ENCODE measurements at regions of chr13 and their contacts with region 1.

Region 1: DNA sequence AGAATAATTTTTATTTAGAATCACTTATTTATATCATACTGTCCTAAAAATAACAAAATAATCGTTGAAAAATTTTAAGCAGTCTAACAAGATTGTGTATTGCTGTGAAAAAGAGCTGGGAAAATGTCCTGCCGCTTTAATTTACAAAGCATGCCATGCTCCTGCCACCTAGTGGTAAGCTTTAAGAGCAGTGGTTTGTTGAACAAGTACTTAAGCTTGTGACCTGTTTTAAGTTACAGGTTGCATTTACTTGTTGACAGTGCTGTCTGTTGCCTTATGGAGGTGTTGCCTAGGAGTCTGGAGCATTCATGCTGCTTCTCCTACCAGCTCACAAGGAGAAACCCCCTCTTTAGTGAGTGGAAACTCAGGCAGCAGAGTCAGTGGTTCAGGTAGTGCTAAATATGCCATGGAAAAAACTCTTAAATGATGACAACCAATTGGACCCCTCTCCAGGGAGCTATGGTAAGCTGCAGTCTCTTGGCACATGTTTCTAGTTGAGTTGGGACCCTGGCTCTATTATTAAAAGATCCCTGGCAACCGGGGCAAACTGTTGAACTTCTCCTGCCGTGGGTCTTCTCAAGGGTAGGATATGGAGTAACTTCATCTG is 68.4 kb downstream of the SPATA13 start:
- DNase-seq: peak; percentile 44
- H3K4me3 Mint-ChIP-seq: no peak overlapping the region
- H3K27ac Mint-ChIP-seq: no peak overlapping the region
- H3K4me1 Mint-ChIP-seq: peaks cover 24% of the 10 kb centered on the region
- H3K27me3 Mint-ChIP-seq: no peaks in the 10 kb centered on the region

Region 2: GRCh38 chr13:23921451-23921888 is 307.5 kb before region 1 on chr13:
- CTCF ChIA-PET with region 1: interaction called, 9 read pairs
- POLR2A ChIA-PET with region 1: no interaction called
- intact Hi-C with region 1: loop called (anchors 2 kb)
- DNase-seq: no peak
- H3K4me3 Mint-ChIP-seq: no peak overlapping the region
- H3K27ac Mint-ChIP-seq: no peak overlapping the region
- H3K4me1 Mint-ChIP-seq: no peaks in the 10 kb centered on the region
- H3K27me3 Mint-ChIP-seq: peaks cover 20% of the 10 kb centered on the region

Region 3: DNA sequence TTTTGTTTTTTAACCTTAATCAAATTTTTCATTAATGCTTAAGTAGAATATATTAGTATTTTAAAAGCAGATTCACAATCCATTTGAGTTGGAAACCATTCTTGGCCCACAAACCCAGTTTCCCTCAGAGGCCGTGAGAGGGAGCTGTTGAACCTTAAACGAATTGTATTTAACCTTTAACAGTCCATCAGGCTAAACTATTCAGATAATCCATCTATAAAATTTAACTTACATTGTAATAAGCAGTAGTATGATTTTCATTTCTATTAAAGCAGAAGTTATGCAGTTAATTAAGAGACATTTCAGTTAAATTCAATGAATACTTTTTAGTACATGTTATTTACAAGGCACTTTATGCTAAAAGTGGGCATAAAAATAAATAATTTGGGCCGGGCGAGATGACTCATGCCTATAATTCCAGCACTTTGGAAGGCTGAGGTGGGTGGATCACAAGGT is 208.6 kb before region 1 on chr13:
- CTCF ChIA-PET with region 1: interaction called, 34 read pairs
- POLR2A ChIA-PET with region 1: no interaction called
- intact Hi-C with region 1: loop called (anchors 1 kb)
- DNase-seq: peak; percentile 51
- H3K4me3 Mint-ChIP-seq: no peak overlapping the region
- H3K27ac Mint-ChIP-seq: no peak overlapping the region
- H3K4me1 Mint-ChIP-seq: peaks cover 3% of the 10 kb centered on the region
- H3K27me3 Mint-ChIP-seq: no peaks in the 10 kb centered on the region

Region 4: DNA sequence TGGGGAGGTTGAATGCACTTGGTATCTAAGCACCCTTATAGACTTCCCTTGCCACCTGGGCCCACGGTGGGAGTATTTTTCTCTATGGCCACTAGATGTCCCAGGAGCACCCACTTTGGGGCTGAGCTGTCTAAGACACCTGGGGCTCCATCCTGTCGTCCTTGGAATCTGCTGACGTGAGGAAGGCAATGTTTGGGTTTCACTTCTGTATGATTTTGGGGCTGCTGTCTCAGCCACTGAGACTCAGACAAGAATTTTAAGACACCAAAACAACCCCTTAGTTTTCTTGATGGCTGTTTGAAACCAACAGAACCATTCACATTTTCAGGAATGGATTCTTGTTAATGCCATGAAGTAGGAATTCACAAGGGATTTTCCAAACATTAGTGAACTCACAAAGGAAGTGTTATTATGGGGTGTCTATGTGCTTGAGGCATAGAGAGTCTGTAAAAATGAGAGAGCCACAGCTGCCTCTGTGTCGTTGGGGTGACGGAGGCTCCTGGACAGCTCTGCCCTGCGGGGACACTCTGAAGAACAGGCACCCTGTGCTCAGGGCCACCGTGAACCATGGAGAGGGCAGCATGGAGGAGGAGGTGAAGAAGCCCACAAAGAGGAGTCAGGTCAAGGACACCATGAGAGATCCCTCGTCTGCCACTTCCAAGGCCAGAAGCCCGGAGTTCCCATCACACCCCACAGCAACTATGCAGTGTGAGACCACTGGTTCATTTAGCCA is 175.3 kb before region 1 on chr13:
- CTCF ChIA-PET with region 1: interaction called, 47 read pairs
- POLR2A ChIA-PET with region 1: no interaction called
- intact Hi-C with region 1: loop called (anchors 2 kb)
- DNase-seq: peak; percentile 78
- H3K4me3 Mint-ChIP-seq: no peak overlapping the region
- H3K27ac Mint-ChIP-seq: no peak overlapping the region
- H3K4me1 Mint-ChIP-seq: peaks cover 4% of the 10 kb centered on the region
- H3K27me3 Mint-ChIP-seq: peaks cover 27% of the 10 kb centered on the region

Region 5: DNA sequence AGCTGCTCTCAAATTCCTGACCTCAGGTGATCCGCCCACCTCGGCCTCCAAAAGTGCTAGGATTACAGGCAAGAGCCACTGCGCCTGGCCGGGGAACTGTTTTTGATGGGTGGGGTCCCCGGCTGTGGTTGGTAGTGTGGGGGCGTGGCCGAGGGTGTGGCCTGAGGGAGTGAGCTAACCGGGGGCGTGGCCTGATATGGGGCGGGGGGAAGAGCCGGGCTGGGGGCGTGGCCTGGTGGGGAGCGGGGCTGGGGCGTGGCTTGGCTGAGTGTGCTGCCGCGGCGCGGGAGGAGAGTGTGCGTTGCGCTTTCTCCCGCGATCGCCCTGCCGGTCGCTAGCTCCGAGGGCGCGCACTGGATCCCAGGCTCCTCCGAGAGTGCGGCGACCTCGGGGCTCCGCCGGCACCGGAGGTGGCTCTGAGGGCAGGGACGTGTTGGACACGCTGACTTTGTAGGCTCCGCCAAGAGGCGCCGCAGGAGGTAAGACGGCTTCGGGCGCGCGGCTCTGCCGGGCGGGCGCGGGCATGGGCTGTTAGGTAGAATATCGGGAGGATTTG is 68.4 kb before region 1 on chr13 and contains the start of gene SPATA13:
- CTCF ChIA-PET with region 1: interaction called, 11 read pairs
- POLR2A ChIA-PET with region 1: no interaction called
- intact Hi-C with region 1: loop called (anchors 1 kb)
- DNase-seq: peak; percentile 94
- H3K4me3 Mint-ChIP-seq: peak within 1 kb of the TSS; percentile 83
- H3K27ac Mint-ChIP-seq: no peak within 1 kb of the TSS
- H3K4me1 Mint-ChIP-seq: peaks cover 13% of the 10 kb centered on the region
- H3K27me3 Mint-ChIP-seq: peaks cover 11% of the 10 kb centered on the region
- total RNA-seq, gene SPATA13: 50.3 to 50.8 TPM

Region 6: DNA sequence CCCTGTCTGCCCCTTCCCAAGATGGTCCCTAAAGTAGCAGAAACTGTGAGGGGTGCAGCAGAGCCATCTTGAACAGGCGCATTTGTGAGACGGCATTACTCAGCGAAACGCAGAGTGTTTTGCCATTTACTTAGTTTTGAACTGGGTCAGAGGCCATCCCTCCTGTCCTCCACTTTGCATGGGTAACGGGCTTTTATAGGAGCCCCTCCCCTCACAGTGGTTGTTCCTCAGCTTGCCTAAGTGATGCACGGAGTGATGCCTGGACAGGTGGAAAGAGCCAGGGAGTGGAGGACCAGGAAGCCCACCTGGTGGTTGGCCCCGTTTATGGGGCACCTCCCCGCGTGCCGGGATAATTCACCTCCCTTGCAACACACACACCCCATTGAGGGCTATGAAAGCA is 12.4 kb after region 1 on chr13:
- CTCF ChIA-PET with region 1: interaction called, 10 read pairs
- POLR2A ChIA-PET with region 1: no interaction called
- intact Hi-C with region 1: no loop called
- DNase-seq: no peak
- H3K4me3 Mint-ChIP-seq: no peak overlapping the region
- H3K27ac Mint-ChIP-seq: no peak overlapping the region
- H3K4me1 Mint-ChIP-seq: no peaks in the 10 kb centered on the region
- H3K27me3 Mint-ChIP-seq: no peaks in the 10 kb centered on the region

Region 7: DNA sequence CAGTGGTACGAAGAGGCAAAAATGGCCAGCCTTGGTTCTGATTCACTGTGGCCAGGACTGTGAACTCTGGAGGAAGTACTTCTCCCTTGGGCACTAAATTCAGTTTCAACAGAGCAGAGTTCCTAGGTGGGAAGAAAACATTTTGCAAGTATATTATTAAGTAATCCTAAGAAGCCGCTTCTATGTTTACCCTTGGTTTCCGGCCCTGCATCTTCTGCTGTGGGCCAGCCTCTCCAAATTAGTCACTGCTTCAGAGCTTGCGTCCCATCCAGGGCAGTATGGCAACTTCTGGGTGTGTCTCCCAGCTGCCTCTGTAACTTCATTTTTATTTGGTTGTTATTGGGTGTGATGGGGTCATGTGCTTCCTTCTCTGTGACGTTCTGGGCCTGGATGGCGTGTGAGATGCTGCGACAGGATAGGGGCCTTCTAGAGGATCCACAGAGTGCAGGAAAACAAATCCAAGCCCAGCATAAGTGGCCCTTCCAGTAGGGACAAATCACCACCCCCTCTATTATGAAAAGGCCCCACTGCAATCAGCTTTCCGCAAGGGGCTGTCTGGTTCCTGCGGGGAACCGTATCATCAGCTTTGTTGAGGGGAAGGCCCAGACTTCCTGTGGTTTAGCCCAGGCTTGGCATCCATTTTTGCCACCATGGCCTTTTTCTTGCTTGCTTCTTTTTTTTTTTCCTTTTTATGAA is 25.3 kb after region 1 on chr13:
- CTCF ChIA-PET with region 1: interaction called, 16 read pairs
- POLR2A ChIA-PET with region 1: interaction called, 12 read pairs
- intact Hi-C with region 1: loop called (anchors 1 kb)
- DNase-seq: peak; percentile 86
- H3K4me3 Mint-ChIP-seq: peak overlapping the region; percentile 87
- H3K27ac Mint-ChIP-seq: peak overlapping the region; percentile 95
- H3K4me1 Mint-ChIP-seq: peaks cover 73% of the 10 kb centered on the region
- H3K27me3 Mint-ChIP-seq: no peaks in the 10 kb centered on the region

Region 8: GRCh38 chr13:24671386-24672107 is 442.6 kb after region 1 on chr13:
- CTCF ChIA-PET with region 1: no interaction called
- POLR2A ChIA-PET with region 1: no interaction called
- intact Hi-C with region 1: no loop called
- DNase-seq: no peak
- H3K4me3 Mint-ChIP-seq: no peak overlapping the region
- H3K27ac Mint-ChIP-seq: no peak overlapping the region
- H3K4me1 Mint-ChIP-seq: peaks cover 10% of the 10 kb centered on the region
- H3K27me3 Mint-ChIP-seq: peaks cover 12% of the 10 kb centered on the region